Esophagus muscularis mucosa (tissue), 4 donors: ENCODE measurements at regions of chr11 and their contacts with region 1.

Region 1: GRCh38 chr11:64688534-64688982 is 34.4 kb downstream of the NRXN2 start:
- DNase-seq: peak; percentile 97
- H3K4me3 ChIP-seq: peak overlapping the region; percentile 41 to 61 (median 48)
- H3K27ac ChIP-seq: peak overlapping the region; percentile 59 to 76 (median 66)
- H3K4me1 ChIP-seq: peaks cover 13 to 26% (median 20%) of the 10 kb centered on the region in 4 donors
- H3K27me3 ChIP-seq: peaks cover 0 to 12% (median 0%) of the 10 kb centered on the region in 4 donors
- CTCF ChIP-seq: peak; percentile 90 to 94 (median 92)
- EP300 ChIP-seq: no peak
- POLR2A ChIP-seq: no peak

Region 2: GRCh38 chr11:64619811-64620380 is 68.7 kb before region 1 on chr11:
- intact Hi-C with region 1: no loop called
- DNase-seq: no peak
- H3K4me3 ChIP-seq: no peak overlapping the region
- H3K27ac ChIP-seq: peak overlapping the region in 3 of 4 donors; percentile 47 to 64 (median 55)
- H3K4me1 ChIP-seq: peaks cover 0 to 23% (median 19%) of the 10 kb centered on the region in 4 donors
- H3K27me3 ChIP-seq: no peaks in the 10 kb centered on the region
- CTCF ChIP-seq: no peak
- EP300 ChIP-seq: no peak
- POLR2A ChIP-seq: no peak

Region 3: GRCh38 chr11:64723117-64723906 is 34.8 kb after region 1 on chr11 and contains the start of gene NRXN2:
- intact Hi-C with region 1: loop called (anchors 1 kb)
- DNase-seq: no peak
- H3K4me3 ChIP-seq: peak within 1 kb of the TSS; percentile 63 to 82 (median 79)
- H3K27ac ChIP-seq: peak within 1 kb of the TSS; percentile 69 to 79 (median 76)
- H3K4me1 ChIP-seq: peaks cover 6 to 11% (median 9%) of the 10 kb centered on the region in 4 donors
- H3K27me3 ChIP-seq: peaks cover 0 to 46% (median 9%) of the 10 kb centered on the region in 4 donors
- CTCF ChIP-seq: peak in 2 of 3 experiments; percentile 91
- EP300 ChIP-seq: no peak
- POLR2A ChIP-seq: no peak
- total RNA-seq, gene NRXN2: 2.1 to 12.9 (median 4.3) TPM

Region 4: DNA sequence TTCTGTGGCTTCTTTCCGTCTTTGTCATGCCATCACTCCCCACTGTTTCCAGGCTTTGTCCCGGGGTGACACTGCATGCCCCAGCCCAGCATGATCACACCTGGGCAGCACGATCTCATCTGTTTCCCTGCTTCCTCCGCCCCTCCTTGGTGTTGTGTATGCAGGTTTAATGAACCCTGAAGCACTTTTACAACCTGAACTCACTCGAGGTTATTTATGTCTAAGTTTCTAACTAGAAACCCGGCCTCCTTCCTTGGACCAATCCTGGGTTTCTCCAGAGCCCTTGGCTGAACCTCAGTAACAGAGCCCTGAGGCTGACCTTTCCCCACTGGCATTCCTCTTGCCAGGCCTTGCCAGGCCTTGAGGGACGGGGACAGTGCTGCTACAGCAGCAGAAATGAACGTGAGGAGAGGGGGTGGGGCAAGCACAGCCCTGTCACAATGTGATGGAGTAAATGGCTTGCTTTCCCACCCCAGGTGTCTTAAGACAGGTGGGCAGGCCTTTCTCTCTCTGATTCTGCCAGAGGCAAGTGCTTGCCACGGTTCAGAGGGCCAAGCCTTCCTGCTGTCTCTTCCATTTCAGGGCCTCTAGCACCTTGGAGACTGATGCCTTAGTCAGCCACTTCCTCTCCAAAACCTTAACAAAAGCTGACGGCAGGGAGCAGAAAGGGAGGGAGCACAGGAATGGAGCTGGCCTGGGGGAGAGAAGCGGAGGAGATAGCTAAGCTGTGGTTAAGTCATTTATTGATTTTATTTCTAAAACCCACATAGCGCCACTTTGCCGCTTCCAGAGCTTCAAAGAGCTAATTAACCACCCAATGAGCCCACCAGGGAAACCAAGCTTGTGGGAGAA is 74.3 kb after region 1 on chr11:
- intact Hi-C with region 1: no loop called
- DNase-seq: no peak
- H3K4me3 ChIP-seq: no peak overlapping the region
- H3K27ac ChIP-seq: peak overlapping the region; percentile 85 to 92 (median 87)
- H3K4me1 ChIP-seq: peaks cover 70 to 100% (median 96%) of the 10 kb centered on the region in 4 donors
- H3K27me3 ChIP-seq: no peaks in the 10 kb centered on the region
- CTCF ChIP-seq: no peak
- EP300 ChIP-seq: no peak
- POLR2A ChIP-seq: no peak

Region 5: GRCh38 chr11:64777449-64778257 is 89.1 kb after region 1 on chr11:
- intact Hi-C with region 1: no loop called
- DNase-seq: no peak
- H3K4me3 ChIP-seq: peak overlapping the region; percentile 90 to 99 (median 96)
- H3K27ac ChIP-seq: peak overlapping the region; percentile 99 to 100 (median 100)
- H3K4me1 ChIP-seq: peaks cover 52 to 56% (median 55%) of the 10 kb centered on the region in 4 donors
- H3K27me3 ChIP-seq: no peaks in the 10 kb centered on the region
- CTCF ChIP-seq: no peak
- EP300 ChIP-seq: no peak
- POLR2A ChIP-seq: no peak